H1 (cell line): ENCODE measurements at regions of chr21 and their contacts with region 1.

Region 1: GRCh38 chr21:30044445-30045064 is 104.8 kb upstream of the GRIK1 start:
- DNase-seq: peak in 1 of 2 experiments; percentile 47
- H3K4me3 ChIP-seq: no peak overlapping the region
- H3K27ac ChIP-seq: no peak overlapping the region
- H3K4me1 ChIP-seq: no peaks in the 10 kb centered on the region
- H3K27me3 ChIP-seq: no peaks in the 10 kb centered on the region; a peak in 1 of 7 replicates
- CTCF ChIP-seq: peak in 2 of 3 experiments; percentile 38 to 59; a peak in 2 of 4 replicates
- EP300 ChIP-seq: no peak
- POLR2A ChIP-seq: no peak
- RAD21 ChIP-seq: peak; percentile 59 to 63

Region 2: GRCh38 chr21:29943885-29944284 is 100.7 kb before region 1 on chr21:
- CTCF ChIA-PET with region 1: interaction called, 39 read pairs
- POLR2A ChIA-PET with region 1: no interaction called
- DNase-seq: no peak
- H3K4me3 ChIP-seq: no peak overlapping the region
- H3K27ac ChIP-seq: no peak overlapping the region
- H3K4me1 ChIP-seq: peaks cover 0 to 2% (median under 1%) of the 10 kb centered on the region in 4 experiments; a peak in 2 of 7 replicates
- H3K27me3 ChIP-seq: peaks cover 9 to 26% (median 24%) of the 10 kb centered on the region in 4 experiments
- CTCF ChIP-seq: peak in 2 of 3 experiments; percentile 43 to 56; a peak in 2 of 4 replicates
- EP300 ChIP-seq: no peak
- POLR2A ChIP-seq: no peak
- RAD21 ChIP-seq: peak; percentile 70 to 74

Region 3: DNA sequence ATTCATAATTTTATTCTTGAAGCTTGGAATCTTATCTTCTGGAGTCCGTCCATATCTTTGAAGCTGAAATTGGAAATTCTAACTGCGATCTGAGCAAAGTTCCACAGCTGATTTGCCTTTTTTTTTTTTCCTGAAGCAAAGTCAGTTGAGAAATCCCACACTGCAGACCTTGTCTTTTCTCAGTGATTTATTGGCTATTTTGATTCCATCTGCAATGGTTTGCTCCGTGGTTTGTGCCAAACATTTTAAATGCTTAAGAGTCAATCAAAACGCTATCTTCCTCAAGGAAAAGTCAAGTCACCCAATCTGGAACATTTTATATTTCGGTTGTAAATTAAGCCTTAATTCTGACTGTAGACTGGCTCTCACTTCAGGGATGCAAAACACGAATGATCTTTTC is 16.6 kb before region 1 on chr21:
- CTCF ChIA-PET with region 1: interaction called, 23 read pairs
- POLR2A ChIA-PET with region 1: no interaction called
- DNase-seq: no peak
- H3K4me3 ChIP-seq: no peak overlapping the region
- H3K27ac ChIP-seq: no peak overlapping the region
- H3K4me1 ChIP-seq: peaks cover 0 to 5% (median 0%) of the 10 kb centered on the region in 4 experiments; a peak in 1 of 7 replicates
- H3K27me3 ChIP-seq: no peaks in the 10 kb centered on the region
- CTCF ChIP-seq: no peak
- EP300 ChIP-seq: no peak
- POLR2A ChIP-seq: no peak
- RAD21 ChIP-seq: no peak

Region 4: DNA sequence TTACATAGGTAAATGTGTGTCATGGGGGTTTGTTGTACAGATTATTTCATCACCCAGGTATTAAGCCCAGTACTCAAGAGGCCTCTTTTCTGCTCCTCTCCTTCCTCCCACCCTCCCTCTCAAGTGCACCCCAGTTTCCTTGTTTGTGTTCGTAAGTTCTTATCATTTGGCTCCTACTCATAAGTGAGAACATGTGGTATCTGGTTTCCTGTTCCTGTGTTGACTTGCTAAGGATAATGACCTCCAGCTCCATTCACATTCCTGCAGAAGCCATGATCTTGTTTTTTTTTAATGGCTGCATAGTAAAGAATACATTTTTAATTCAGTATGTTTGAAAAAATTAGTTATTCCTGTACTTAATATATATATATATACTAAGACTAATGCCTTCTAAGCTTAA is 14.4 kb after region 1 on chr21:
- CTCF ChIA-PET with region 1: interaction called, 34 read pairs
- POLR2A ChIA-PET with region 1: no interaction called
- DNase-seq: no peak
- H3K4me3 ChIP-seq: no peak overlapping the region
- H3K27ac ChIP-seq: no peak overlapping the region
- H3K4me1 ChIP-seq: no peaks in the 10 kb centered on the region
- H3K27me3 ChIP-seq: no peaks in the 10 kb centered on the region
- CTCF ChIP-seq: no peak
- EP300 ChIP-seq: no peak
- POLR2A ChIP-seq: no peak
- RAD21 ChIP-seq: no peak

Region 5: DNA sequence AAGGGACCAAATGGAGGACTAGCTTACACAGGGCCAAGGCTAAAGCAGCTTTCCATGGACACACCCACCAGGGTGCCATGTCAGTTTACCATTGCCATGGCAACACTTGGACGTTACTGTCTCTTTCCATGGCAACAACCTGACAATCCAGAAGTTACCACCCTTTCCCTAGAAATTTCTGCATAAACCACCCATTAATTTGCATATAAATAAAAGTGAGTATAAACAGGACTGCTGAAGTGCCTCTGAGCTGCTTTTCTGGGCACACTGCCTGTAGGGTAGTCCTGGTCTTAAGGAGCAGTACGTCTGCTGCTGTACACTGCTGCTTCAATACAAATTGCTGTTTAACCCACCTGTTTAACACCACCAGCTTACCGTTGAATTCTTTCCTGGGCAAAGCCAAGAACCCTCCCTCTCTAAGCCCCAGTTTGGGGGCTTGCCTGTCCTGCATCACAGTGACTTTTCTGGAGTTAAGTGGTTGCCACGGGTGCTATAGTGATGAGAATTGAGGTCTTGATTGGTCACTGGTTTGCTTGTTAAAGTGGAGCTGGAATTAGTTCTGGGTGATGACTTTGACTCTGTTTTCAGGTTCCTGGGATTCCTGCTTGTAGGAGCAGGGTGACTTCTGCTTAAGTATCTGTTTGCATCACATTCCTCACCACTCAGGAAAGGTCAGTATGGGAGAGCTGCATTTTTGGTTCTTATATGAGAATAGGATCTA is 38.8 kb after region 1 on chr21:
- CTCF ChIA-PET with region 1: interaction called, 10 read pairs
- POLR2A ChIA-PET with region 1: no interaction called
- DNase-seq: peak in 1 of 2 experiments; percentile 61
- H3K4me3 ChIP-seq: peak overlapping the region in 1 of 4 experiments; percentile 32; a peak in 1 of 8 replicates
- H3K27ac ChIP-seq: peak overlapping the region; percentile 51; the same call in 1 of the 2 replicates
- H3K4me1 ChIP-seq: peaks cover 0 to 10% (median 7%) of the 10 kb centered on the region in 4 experiments; a peak in 5 of 7 replicates
- H3K27me3 ChIP-seq: no peaks in the 10 kb centered on the region
- CTCF ChIP-seq: no peak
- EP300 ChIP-seq: no peak
- POLR2A ChIP-seq: 0 out of 3 replicates have a peak, but pooled peaks of 1 of the 2 experiments have one; percentile 46
- RAD21 ChIP-seq: no peak

Region 6: GRCh38 chr21:30194701-30195299 is 150.2 kb after region 1 on chr21:
- CTCF ChIA-PET with region 1: interaction called, 38 read pairs
- POLR2A ChIA-PET with region 1: no interaction called
- DNase-seq: no peak
- H3K4me3 ChIP-seq: no peak overlapping the region
- H3K27ac ChIP-seq: no peak overlapping the region
- H3K4me1 ChIP-seq: no peaks in the 10 kb centered on the region
- H3K27me3 ChIP-seq: no peaks in the 10 kb centered on the region
- CTCF ChIP-seq: peak in 2 of 3 experiments; percentile 51 to 72; a peak in 2 of 4 replicates
- EP300 ChIP-seq: no peak
- POLR2A ChIP-seq: no peak
- RAD21 ChIP-seq: peak; percentile 83

Region 7: DNA sequence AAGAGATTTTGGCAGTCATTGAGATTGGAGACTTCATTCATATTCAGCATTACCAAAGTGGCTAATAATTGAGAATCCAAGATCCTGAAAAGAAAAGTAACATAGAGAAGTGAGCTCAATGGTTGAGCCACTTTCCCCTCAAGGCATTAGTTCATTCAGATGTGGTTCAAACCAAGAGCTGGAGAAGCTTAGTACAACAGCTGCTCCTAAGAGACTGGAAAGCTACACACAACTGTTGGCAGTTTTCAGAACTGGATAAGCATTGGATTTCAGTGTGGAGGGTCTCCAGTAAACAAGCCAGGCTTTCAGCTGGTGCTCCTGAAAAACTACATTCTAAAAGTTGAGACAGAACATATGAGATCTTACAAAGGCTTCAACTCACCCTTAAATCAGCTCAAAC is 200.5 kb after region 1 on chr21:
- CTCF ChIA-PET with region 1: interaction called, 11 read pairs
- POLR2A ChIA-PET with region 1: no interaction called
- DNase-seq: no peak
- H3K4me3 ChIP-seq: no peak overlapping the region
- H3K27ac ChIP-seq: no peak overlapping the region
- H3K4me1 ChIP-seq: no peaks in the 10 kb centered on the region
- H3K27me3 ChIP-seq: no peaks in the 10 kb centered on the region
- CTCF ChIP-seq: no peak
- EP300 ChIP-seq: no peak
- POLR2A ChIP-seq: no peak
- RAD21 ChIP-seq: no peak